MCF 10A (cell line): ENCODE measurements at regions of chr13 and their contacts with region 1.

Region 1: DNA sequence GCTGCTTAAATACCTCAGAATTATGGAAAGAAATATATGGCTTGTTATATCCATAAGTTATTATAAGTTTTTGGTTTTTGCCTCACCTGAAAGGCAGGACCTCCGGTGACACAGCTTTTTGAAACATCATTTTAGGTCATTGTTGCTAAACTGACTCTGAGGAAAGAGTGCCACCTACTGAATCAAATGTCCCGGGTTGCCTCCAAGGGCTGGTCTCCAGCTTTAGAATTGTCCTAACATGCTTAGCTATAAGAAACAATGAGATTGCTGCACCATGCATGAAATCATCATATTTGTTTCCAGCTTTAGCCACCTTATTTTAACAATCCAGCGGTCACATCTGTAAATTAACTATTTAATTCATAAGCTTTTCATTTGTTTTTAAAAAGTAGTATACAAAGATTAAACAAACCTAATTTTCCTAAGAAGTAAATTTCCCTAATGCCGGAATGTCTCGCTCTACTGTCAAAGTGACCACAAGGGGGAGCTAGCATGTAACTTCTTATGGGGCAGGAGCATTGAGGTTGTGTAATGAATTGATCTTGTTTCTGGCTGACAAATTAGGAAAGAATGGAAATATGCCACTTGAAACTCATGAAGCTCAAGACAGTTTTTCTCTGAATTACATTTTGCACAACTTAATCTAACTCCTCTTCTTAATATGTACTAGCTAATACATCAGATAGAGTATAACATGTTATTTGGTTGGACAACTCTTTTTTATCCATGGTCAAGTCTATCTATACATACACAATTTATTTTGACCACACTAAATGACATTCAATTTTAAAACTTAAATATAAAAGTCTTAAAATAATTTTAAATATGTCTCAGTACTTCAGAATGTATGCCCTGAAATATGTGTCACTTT is 6.7 kb upstream of the PCDH17 start:
- DNase-seq: peak; percentile 82
- H3K4me3 Mint-ChIP-seq: no peak overlapping the region
- H3K27ac Mint-ChIP-seq: no peak overlapping the region
- H3K4me1 Mint-ChIP-seq: no peaks in the 10 kb centered on the region
- H3K27me3 Mint-ChIP-seq: peaks cover 57% of the 10 kb centered on the region
- CTCF ChIP-seq: peak; percentile 59

Region 2: DNA sequence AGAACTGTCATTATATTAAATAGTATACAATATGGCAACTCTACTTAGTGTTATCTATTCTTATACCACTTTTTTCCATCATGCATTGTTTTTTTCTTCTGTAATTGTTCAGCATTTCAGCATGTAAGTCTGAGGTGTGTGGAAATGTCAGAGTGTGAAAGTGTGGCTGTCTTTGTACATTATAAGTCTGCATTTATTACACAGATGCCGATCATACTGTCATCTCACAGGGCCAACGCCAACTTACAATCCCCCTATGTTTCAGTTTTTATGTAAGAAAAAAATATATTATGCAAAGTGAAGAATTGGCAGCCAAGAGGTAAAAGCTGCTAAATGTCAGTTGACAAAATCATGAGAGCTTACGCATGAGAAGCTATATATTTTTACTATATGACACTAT is 36.2 kb before region 1 on chr13:
- CTCF ChIA-PET with region 1: interaction called, 10 read pairs
- POLR2A ChIA-PET with region 1: no interaction called
- intact Hi-C with region 1: no loop called
- DNase-seq: no peak
- H3K4me3 Mint-ChIP-seq: no peak overlapping the region
- H3K27ac Mint-ChIP-seq: no peak overlapping the region
- H3K4me1 Mint-ChIP-seq: no peaks in the 10 kb centered on the region
- H3K27me3 Mint-ChIP-seq: no peaks in the 10 kb centered on the region
- CTCF ChIP-seq: no peak

Region 3: GRCh38 chr13:57604442-57604841 is 20.4 kb before region 1 on chr13:
- CTCF ChIA-PET with region 1: interaction called, 12 read pairs
- POLR2A ChIA-PET with region 1: no interaction called
- intact Hi-C with region 1: no loop called
- DNase-seq: no peak
- H3K4me3 Mint-ChIP-seq: no peak overlapping the region
- H3K27ac Mint-ChIP-seq: no peak overlapping the region
- H3K4me1 Mint-ChIP-seq: no peaks in the 10 kb centered on the region
- H3K27me3 Mint-ChIP-seq: peaks cover 26% of the 10 kb centered on the region
- CTCF ChIP-seq: no peak

Region 4: GRCh38 chr13:57612568-57612967 is 12.2 kb before region 1 on chr13:
- CTCF ChIA-PET with region 1: interaction called, 12 read pairs
- POLR2A ChIA-PET with region 1: no interaction called
- intact Hi-C with region 1: no loop called
- DNase-seq: no peak
- H3K4me3 Mint-ChIP-seq: no peak overlapping the region
- H3K27ac Mint-ChIP-seq: no peak overlapping the region
- H3K4me1 Mint-ChIP-seq: no peaks in the 10 kb centered on the region
- H3K27me3 Mint-ChIP-seq: peaks cover 9% of the 10 kb centered on the region
- CTCF ChIP-seq: no peak

Region 5: GRCh38 chr13:57982782-57983181 is 358.0 kb after region 1 on chr13:
- CTCF ChIA-PET with region 1: no interaction called
- POLR2A ChIA-PET with region 1: no interaction called
- intact Hi-C with region 1: no loop called
- DNase-seq: no peak
- H3K4me3 Mint-ChIP-seq: no peak overlapping the region
- H3K27ac Mint-ChIP-seq: no peak overlapping the region
- H3K4me1 Mint-ChIP-seq: no peaks in the 10 kb centered on the region
- H3K27me3 Mint-ChIP-seq: no peaks in the 10 kb centered on the region
- CTCF ChIP-seq: no peak

Region 6: GRCh38 chr13:58960888-58961287 is 1336.1 kb after region 1 on chr13:
- CTCF ChIA-PET with region 1: no interaction called
- POLR2A ChIA-PET with region 1: no interaction called
- intact Hi-C with region 1: loop called (anchors 5 kb)
- DNase-seq: peak; percentile 14
- H3K4me3 Mint-ChIP-seq: no peak overlapping the region
- H3K27ac Mint-ChIP-seq: no peak overlapping the region
- H3K4me1 Mint-ChIP-seq: no peaks in the 10 kb centered on the region
- H3K27me3 Mint-ChIP-seq: peaks cover 11% of the 10 kb centered on the region
- CTCF ChIP-seq: peak; percentile 17

Region 7: DNA sequence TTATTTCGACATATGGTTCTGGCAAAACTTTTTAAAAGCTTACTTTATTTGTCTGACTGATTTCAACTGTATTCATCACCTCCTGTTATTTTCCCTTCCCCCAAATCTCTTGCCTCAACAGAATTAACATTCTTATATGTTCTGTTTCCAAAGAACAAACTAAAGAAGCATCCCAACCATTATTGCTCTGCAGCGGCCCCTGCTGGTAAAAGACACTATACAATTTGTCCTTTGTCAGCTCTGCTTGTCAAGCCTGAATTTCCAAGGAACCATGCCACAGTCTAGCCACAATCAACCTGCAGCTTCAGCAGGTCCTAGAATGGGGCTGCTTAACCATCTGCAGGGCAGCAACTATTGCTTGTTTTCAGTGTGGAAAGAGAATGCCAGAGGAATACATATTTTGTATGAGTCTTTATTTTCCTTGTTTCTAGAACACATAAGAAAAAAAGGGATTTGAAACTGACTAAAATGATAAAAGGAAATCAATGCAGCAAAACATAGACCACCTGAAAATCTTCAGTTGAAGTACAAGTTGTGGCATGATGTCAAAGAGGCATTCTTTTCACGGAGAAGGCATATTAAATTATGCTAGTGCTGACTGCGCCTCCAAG is 1693.6 kb after region 1 on chr13:
- CTCF ChIA-PET with region 1: interaction called, 7 read pairs
- POLR2A ChIA-PET with region 1: no interaction called
- intact Hi-C with region 1: loop called (anchors 2 kb)
- DNase-seq: peak; percentile 86
- H3K4me3 Mint-ChIP-seq: no peak overlapping the region
- H3K27ac Mint-ChIP-seq: no peak overlapping the region
- H3K4me1 Mint-ChIP-seq: no peaks in the 10 kb centered on the region
- H3K27me3 Mint-ChIP-seq: peaks cover 77% of the 10 kb centered on the region
- CTCF ChIP-seq: peak; percentile 72